ENCODE measurements at regions of chr13 and their contacts with region 1.

Region 1: GRCh38 chr13:62781866-62782265 is 1366.2 kb upstream of the PCDH20 start:
- DNase-seq: no peak
- ATAC-seq: no peak
- H3K4me3 ChIP-seq: no peak overlapping the region
- H3K27ac ChIP-seq: no peak overlapping the region
- H3K4me1 ChIP-seq: no peaks in the 10 kb centered on the region
- H3K27me3 ChIP-seq: no peaks in the 10 kb centered on the region
- CTCF ChIP-seq: no peak

Region 2: GRCh38 chr13:62799931-62800436 is 18.1 kb after region 1 on chr13:
- intact Hi-C with region 1: loop called in 1 of 10 experiments (anchors 2 kb)
- DNase-seq: no peak
- ATAC-seq: peak in 1 of 8 donors; percentile 67
- H3K4me3 ChIP-seq: no peak overlapping the region
- H3K27ac ChIP-seq: no peak overlapping the region
- H3K4me1 ChIP-seq: no peaks in the 10 kb centered on the region
- H3K27me3 ChIP-seq: no peaks in the 10 kb centered on the region
- CTCF ChIP-seq: no peak